ENCODE measurements at regions of chr7 and their contacts with region 1.

Region 1: GRCh38 chr7:124779194-124779593 is 13.6 kb upstream of the GPR37 start:
- DNase-seq: no peak
- H3K4me3 ChIP-seq: no peak overlapping the region
- H3K27me3 ChIP-seq: no peaks in the 10 kb centered on the region
- CTCF ChIP-seq: no peak

Region 2: GRCh38 chr7:124034757-124035107 is 744.5 kb before region 1 on chr7:
- CTCF ChIA-PET with region 1: no interaction called
- POLR2A ChIA-PET with region 1: interaction called, 15 read pairs
- DNase-seq: no peak
- H3K4me3 ChIP-seq: no peak overlapping the region
- H3K27me3 ChIP-seq: peaks cover 12% of the 10 kb centered on the region
- CTCF ChIP-seq: no peak

Region 3: GRCh38 chr7:124263232-124263827 is 515.9 kb before region 1 on chr7:
- CTCF ChIA-PET with region 1: no interaction called
- POLR2A ChIA-PET with region 1: no interaction called
- DNase-seq: no peak
- H3K4me3 ChIP-seq: no peak overlapping the region
- H3K27me3 ChIP-seq: no peaks in the 10 kb centered on the region
- CTCF ChIP-seq: no peak

Region 4: GRCh38 chr7:124765401-124766352 is 13.5 kb before region 1 on chr7 and contains the start of gene GPR37:
- CTCF ChIA-PET with region 1: interaction called, 13 read pairs
- POLR2A ChIA-PET with region 1: no interaction called
- DNase-seq: no peak
- H3K4me3 ChIP-seq: peak within 1 kb of the TSS; percentile 52
- H3K27me3 ChIP-seq: peaks cover 8% of the 10 kb centered on the region
- CTCF ChIP-seq: peak; percentile 48
- polyA plus RNA-seq, gene GPR37: 0.25 and 0.33 TPM in 2 replicates

Measured in BJ (cell line).